Breast epithelium (tissue), 4 donors: ENCODE measurements at regions of chr5 and their contacts with region 1.

Region 1: DNA sequence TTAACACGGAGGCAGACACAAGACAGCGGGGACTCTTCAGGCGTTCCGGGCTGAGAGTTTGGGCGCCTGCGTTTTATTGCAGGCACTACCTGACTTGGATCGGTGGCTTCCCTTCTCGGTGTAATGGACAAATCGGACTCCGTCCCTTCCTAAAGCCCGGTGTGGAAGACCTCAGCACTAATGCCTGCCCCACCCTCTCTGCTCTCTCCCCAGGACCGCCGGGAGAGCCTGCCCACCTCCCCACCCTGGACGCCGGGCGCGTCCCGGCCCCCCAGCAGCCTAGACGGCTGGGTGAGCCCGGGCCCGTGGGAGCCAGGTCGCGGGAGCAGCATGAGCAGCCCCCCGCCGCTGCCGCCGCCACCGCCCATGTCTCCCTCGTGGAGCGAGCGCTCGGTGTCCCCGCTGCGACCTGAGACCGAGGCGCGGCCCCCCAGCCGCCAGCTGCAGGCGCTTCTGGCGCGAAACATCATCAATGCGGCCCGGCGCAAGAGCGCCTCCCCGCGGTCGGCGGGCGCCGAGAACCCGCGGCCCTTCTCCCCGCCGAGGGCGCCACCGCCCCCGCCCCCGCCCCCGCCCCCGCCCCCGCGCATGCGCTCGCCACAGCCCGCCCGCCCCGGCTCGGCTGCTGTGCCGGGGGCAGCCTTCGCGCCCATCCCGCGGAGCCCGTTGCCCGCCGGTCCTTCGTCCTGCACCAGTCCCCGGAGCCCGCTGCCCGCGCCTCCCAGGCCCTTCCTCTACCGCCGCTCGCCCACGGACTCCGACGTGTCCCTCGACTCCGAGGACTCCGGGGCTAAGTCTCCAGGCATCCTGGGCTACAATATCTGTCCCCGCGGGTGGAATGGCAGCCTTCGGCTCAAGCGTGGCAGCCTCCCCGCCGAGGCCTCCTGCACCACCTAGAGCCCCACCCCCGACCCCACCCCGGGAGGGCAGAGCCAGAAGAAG is 4.6 kb upstream of the MYOZ3 start:
- DNase-seq: peak in 1 of 2 donors; percentile 70
- H3K4me3 ChIP-seq: peak overlapping the region; percentile 48 to 82 (median 57)
- H3K27ac ChIP-seq: peak overlapping the region; percentile 50 to 80
- H3K4me1 ChIP-seq: peaks cover 0 to 7% of the 10 kb centered on the region in 2 donors
- H3K27me3 ChIP-seq: no peaks in the 10 kb centered on the region
- CTCF ChIP-seq: peak; percentile 15 to 55 (median 30)
- POLR2A ChIP-seq: no peak

Region 2: DNA sequence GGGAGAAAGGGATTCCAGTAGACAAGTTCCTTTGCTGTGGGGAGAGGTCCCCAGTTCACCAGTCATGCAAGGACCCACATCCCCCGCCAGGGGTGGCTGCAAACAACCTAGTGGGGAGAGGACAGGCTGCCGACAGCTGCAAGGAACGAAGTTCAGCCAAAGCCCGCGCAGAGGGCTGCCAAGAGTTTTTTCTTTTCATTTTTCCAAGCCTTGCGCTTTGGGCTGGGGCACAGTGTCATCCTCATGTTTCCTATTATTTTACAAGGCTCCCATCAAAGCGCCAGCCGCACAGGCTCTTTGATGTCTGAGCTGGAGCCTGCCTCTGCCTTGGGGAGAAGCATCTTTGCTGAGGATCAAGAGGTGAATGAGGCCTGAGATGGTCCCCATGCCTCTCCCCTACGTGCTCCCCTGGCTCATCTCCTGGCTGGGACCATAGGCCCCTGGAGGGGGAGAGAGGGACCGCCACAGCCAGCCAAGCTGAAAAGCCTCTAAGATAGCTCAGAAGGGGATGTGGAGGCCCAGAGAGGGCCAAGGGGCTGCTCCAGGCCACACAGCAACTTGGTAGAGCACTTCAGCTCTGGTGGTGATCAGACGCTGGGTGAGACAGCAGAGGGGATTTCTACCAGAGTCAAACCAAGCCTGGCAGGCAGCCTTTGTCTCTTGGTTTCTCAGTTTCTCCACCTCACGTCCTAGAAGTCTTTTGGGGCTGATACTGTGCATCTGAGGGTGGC is 66.4 kb before region 1 on chr5:
- intact Hi-C with region 1: loop called (anchors 10 kb)
- DNase-seq: peak in 1 of 2 donors; percentile 60
- H3K4me3 ChIP-seq: no peak overlapping the region
- H3K27ac ChIP-seq: peak overlapping the region; percentile 64 to 85
- H3K4me1 ChIP-seq: peaks cover 4 to 13% of the 10 kb centered on the region in 2 donors
- H3K27me3 ChIP-seq: no peaks in the 10 kb centered on the region
- CTCF ChIP-seq: peak; percentile 29 to 70 (median 67)
- POLR2A ChIP-seq: no peak